ENCODE measurements at regions of chr6 and their contacts with region 1.

Region 1: DNA sequence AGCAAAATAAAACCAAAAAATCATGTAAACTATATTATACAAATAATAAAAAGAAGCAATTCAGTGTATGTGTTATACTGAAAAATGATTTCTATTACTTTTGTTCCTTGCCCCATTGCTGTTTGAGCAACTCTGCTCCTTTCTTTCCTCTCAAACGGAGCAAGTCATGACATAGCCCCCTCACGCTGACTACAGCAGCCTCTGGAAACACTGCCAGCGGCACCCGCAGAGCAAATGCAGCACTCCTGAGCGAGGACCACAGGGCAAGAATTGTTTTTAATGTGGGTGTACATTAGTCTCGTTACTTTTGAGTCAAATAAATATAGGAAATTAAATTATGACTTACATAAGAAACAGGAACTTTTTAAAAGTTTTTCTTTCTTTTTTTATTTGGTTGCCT is 350.1 kb upstream of the HSF2 start:
- DNase-seq: no peak
- ATAC-seq: no peak
- H3K4me3 ChIP-seq: no peak overlapping the region
- H3K27ac ChIP-seq: no peak overlapping the region
- H3K4me1 ChIP-seq: no peaks in the 10 kb centered on the region
- H3K27me3 ChIP-seq: no peaks in the 10 kb centered on the region
- CTCF ChIP-seq: no peak
- EP300 ChIP-seq: no peak
- POLR2A ChIP-seq: no peak
- RAD21 ChIP-seq: no peak

Region 2: GRCh38 chr6:121210943-121211342 is 838.4 kb before region 1 on chr6:
- CTCF ChIA-PET with region 1: no interaction called
- POLR2A ChIA-PET with region 1: no interaction called
- in situ Hi-C with region 1: no loop called
- intact Hi-C with region 1: loop called (anchors 5 kb)
- DNase-seq: peak in 1 of 4 experiments; percentile 4
- ATAC-seq: peak; percentile 54; the same call in 2 of the 3 replicates
- H3K4me3 ChIP-seq: no peak overlapping the region
- H3K27ac ChIP-seq: no peak overlapping the region
- H3K4me1 ChIP-seq: no peaks in the 10 kb centered on the region
- H3K27me3 ChIP-seq: no peaks in the 10 kb centered on the region
- CTCF ChIP-seq: no peak
- EP300 ChIP-seq: no peak
- POLR2A ChIP-seq: no peak
- RAD21 ChIP-seq: no peak

Region 3: GRCh38 chr6:122033539-122034181 is 15.7 kb before region 1 on chr6:
- CTCF ChIA-PET with region 1: no interaction called
- POLR2A ChIA-PET with region 1: no interaction called
- in situ Hi-C with region 1: no loop called
- intact Hi-C with region 1: no loop called
- DNase-seq: peak; percentile 14 to 27 (median 16)
- ATAC-seq: peak; percentile 59; the same call in 2 of the 3 replicates
- H3K4me3 ChIP-seq: no peak overlapping the region
- H3K27ac ChIP-seq: no peak overlapping the region
- H3K4me1 ChIP-seq: no peaks in the 10 kb centered on the region
- H3K27me3 ChIP-seq: no peaks in the 10 kb centered on the region
- CTCF ChIP-seq: peak in 2 of 3 experiments; percentile 39 to 45; a peak in 3 of 6 replicates
- EP300 ChIP-seq: no peak
- POLR2A ChIP-seq: no peak
- RAD21 ChIP-seq: peak; percentile 55 to 68

Region 4: DNA sequence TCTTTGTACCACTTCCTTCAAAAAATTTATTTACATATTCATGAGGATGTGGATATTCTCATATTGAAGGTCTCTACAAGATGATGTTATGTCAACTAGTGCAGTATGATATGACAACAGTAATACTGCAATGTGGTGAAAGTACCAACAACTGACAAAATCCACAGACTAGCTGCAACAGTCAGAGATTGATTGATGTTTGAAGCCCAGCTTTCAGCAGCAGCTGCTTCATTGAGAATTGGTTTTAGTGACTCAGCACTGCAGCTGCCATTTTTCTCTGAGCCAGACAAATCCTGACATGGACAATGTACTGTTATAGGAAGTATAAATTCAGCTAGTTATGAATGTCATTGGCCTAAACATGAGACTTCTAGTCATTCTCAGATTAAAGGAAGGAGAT is 614.6 kb after region 1 on chr6:
- CTCF ChIA-PET with region 1: no interaction called
- POLR2A ChIA-PET with region 1: no interaction called
- in situ Hi-C with region 1: no loop called
- intact Hi-C with region 1: no loop called
- DNase-seq: peak in 1 of 4 experiments; percentile 14
- ATAC-seq: no peak
- H3K4me3 ChIP-seq: no peak overlapping the region
- H3K27ac ChIP-seq: no peak overlapping the region
- H3K4me1 ChIP-seq: no peaks in the 10 kb centered on the region
- H3K27me3 ChIP-seq: no peaks in the 10 kb centered on the region
- CTCF ChIP-seq: no peak
- EP300 ChIP-seq: no peak
- POLR2A ChIP-seq: no peak
- RAD21 ChIP-seq: no peak

Measured in K562 (cell line).